GM12878 (cell line): ENCODE measurements at regions of chr17 and their contacts with region 1.

Region 1: DNA sequence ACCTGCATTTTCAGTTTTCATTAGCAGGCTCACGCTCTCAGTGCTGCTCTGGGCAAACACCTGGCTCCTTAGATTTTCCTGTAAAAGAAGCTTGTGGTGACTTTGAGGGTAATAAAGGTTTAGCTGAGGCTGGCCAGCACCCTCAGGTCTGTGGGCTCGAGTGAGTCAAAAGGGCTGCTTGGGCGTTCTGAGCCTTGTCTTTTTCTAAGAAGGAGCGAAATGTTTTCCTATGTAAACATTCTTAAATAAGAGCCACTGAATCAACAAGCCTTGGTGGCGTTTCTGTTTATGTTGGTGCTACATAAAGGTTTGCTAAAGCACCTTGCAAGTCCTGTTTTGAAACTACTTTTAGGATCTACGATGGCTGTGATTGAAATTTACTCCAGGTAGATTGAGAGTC is 38.8 kb downstream of the SHISA6 start:
- DNase-seq: no peak
- ATAC-seq: no peak
- H3K4me3 ChIP-seq: no peak overlapping the region
- H3K27ac ChIP-seq: no peak overlapping the region
- H3K4me1 ChIP-seq: no peaks in the 10 kb centered on the region
- H3K27me3 ChIP-seq: no peaks in the 10 kb centered on the region
- CTCF ChIP-seq: no peak
- EP300 ChIP-seq: no peak
- POLR2A ChIP-seq: no peak
- RAD21 ChIP-seq: no peak

Region 2: GRCh38 chr17:11074451-11074850 is 205.4 kb before region 1 on chr17:
- CTCF ChIA-PET with region 1: no interaction called
- POLR2A ChIA-PET with region 1: no interaction called
- RAD21 ChIA-PET with region 1: no interaction called
- SMC1A ChIA-PET with region 1: no interaction called
- in situ Hi-C with region 1: loop called (anchors 10 kb)
- intact Hi-C with region 1: no loop called
- DNase-seq: no peak
- ATAC-seq: no peak
- H3K4me3 ChIP-seq: no peak overlapping the region
- H3K27ac ChIP-seq: no peak overlapping the region
- H3K4me1 ChIP-seq: no peaks in the 10 kb centered on the region
- H3K27me3 ChIP-seq: no peaks in the 10 kb centered on the region
- CTCF ChIP-seq: no peak
- EP300 ChIP-seq: no peak
- POLR2A ChIP-seq: no peak
- RAD21 ChIP-seq: no peak

Region 3: GRCh38 chr17:11182430-11182829 is 97.4 kb before region 1 on chr17:
- CTCF ChIA-PET with region 1: no interaction called
- POLR2A ChIA-PET with region 1: no interaction called
- RAD21 ChIA-PET with region 1: no interaction called
- SMC1A ChIA-PET with region 1: no interaction called
- in situ Hi-C with region 1: loop called (anchors 10 kb)
- intact Hi-C with region 1: no loop called
- DNase-seq: no peak
- ATAC-seq: no peak
- H3K4me3 ChIP-seq: no peak overlapping the region
- H3K27ac ChIP-seq: no peak overlapping the region
- H3K4me1 ChIP-seq: no peaks in the 10 kb centered on the region
- H3K27me3 ChIP-seq: no peaks in the 10 kb centered on the region
- CTCF ChIP-seq: no peak
- EP300 ChIP-seq: no peak
- POLR2A ChIP-seq: no peak
- RAD21 ChIP-seq: no peak

Region 4: DNA sequence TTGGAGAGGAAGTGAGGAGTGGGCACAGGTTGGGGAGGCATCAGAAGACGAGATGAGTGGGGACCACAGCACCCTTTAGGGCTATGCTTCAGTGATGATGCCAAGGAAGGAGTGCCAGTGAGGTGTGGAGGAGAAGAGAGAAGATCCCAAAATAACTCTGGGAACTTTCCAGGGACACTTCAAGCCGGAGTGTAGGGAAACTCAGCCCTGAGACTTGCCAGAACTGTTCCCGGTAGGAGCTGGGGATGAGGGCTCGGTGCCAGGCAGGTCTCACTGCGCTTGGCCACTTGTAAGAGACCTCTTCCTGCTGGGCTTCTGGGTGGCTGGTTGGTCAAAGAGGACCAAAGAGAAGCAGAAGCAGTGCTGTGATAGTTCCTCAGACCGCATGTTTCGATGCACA is 24.7 kb after region 1 on chr17:
- CTCF ChIA-PET with region 1: no interaction called
- POLR2A ChIA-PET with region 1: no interaction called
- RAD21 ChIA-PET with region 1: no interaction called
- SMC1A ChIA-PET with region 1: no interaction called
- in situ Hi-C with region 1: no loop called
- intact Hi-C with region 1: no loop called
- DNase-seq: no peak
- ATAC-seq: no peak
- H3K4me3 ChIP-seq: no peak overlapping the region
- H3K27ac ChIP-seq: no peak overlapping the region
- H3K4me1 ChIP-seq: no peaks in the 10 kb centered on the region
- H3K27me3 ChIP-seq: no peaks in the 10 kb centered on the region
- CTCF ChIP-seq: no peak
- EP300 ChIP-seq: no peak
- POLR2A ChIP-seq: no peak
- RAD21 ChIP-seq: no peak

Region 5: DNA sequence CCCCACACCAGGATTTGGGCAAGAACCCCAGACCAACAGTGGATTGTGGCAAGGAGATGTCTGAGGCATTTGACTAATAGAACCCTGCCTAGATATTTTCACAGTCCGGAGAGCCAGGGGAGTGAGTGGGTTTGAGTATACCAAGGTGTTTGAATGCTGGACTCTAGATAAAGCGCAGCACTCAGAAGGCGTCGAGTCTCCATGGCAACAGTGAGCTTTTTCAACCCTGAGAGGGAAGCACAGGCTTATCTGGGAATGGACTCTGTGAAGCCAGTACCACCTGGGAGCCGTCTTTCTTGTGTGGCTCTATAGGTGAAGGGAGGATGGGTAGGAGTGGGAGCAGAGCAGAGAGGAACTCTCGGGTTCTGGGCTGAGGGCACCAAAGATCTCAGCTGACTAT is 108.2 kb after region 1 on chr17:
- CTCF ChIA-PET with region 1: no interaction called
- POLR2A ChIA-PET with region 1: no interaction called
- RAD21 ChIA-PET with region 1: no interaction called
- SMC1A ChIA-PET with region 1: no interaction called
- in situ Hi-C with region 1: loop called (anchors 10 kb)
- intact Hi-C with region 1: no loop called
- DNase-seq: no peak
- ATAC-seq: no peak
- H3K4me3 ChIP-seq: no peak overlapping the region
- H3K27ac ChIP-seq: no peak overlapping the region
- H3K4me1 ChIP-seq: no peaks in the 10 kb centered on the region
- H3K27me3 ChIP-seq: no peaks in the 10 kb centered on the region
- CTCF ChIP-seq: no peak
- EP300 ChIP-seq: no peak
- POLR2A ChIP-seq: no peak
- RAD21 ChIP-seq: no peak